ENCODE measurements at regions of chr5 and their contacts with region 1.

Region 1: DNA sequence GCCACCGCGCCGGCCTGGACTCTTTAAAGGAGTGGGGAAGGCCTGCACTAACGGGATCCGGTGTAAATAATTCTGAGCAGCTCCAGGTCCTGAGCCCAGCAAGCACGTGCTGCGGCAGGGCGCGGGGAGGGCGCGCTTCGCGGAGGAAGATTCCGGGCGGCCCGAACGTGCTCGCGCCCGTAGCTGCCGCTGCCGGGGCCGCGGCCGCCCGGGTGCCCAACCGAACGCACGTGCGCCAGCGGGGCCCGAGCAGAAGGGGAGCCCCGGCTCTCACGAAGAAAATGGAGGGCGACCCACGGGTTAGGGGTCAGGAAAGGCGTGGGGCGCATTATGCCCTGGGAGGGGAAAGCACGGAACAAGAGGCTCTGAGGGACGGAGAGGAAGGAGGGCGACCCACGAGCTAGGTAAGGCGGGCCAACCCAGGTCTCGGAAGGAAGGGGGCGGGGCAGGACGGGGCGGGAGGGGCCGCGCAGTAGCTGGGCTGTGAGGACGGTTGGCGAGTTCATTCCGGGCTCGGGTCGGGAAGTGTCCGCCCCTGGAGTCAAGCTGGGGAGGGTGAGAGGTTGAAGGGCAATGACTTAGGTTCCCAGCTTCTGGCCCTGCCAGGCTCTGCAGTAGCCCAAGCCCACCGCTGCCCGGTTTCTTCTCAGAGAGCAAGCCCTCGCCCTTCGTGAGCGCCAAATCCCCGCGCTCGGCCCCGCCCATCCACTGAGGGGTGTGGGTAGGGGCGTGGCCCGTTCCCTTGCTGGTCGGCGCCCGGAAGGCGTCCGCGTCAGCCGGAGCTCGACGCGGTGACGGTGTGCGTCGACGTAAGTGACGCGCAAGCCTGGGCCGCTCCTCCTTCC is at the start of gene ZNF131:
- DNase-seq: peak; percentile 96
- H3K4me3 Mint-ChIP-seq: peak within 1 kb of the TSS; percentile 92
- H3K27ac Mint-ChIP-seq: peak within 1 kb of the TSS; percentile 90
- H3K4me1 Mint-ChIP-seq: peaks cover 5% of the 10 kb centered on the region
- H3K27me3 Mint-ChIP-seq: no peaks in the 10 kb centered on the region
- CTCF ChIP-seq: no peak
- total RNA-seq, gene ZNF131: 41.3 and 42.4 TPM in 2 replicates

Region 2: DNA sequence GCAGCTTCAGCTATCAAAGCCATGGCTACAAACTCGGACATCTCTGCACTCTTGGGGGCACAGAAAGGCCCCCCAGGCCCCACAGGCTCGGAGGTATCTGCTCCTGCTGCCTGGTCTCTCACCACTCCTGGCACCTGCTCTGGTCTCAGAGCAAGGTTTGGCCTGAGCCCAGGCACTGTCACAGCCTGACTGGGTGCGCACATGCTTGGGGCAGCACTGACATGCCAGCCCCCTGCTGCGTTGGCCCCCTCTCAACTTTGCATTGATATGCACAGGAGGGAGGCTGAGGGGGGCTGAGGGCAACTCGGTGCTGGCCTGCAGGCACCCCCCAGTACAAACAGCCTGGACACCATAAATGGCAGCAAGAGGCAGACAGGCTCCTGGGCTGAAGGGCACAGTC is 724.8 kb before region 1 on chr5:
- CTCF ChIA-PET with region 1: no interaction called
- POLR2A ChIA-PET with region 1: no interaction called
- intact Hi-C with region 1: no loop called
- DNase-seq: no peak
- H3K4me3 Mint-ChIP-seq: no peak overlapping the region
- H3K27ac Mint-ChIP-seq: no peak overlapping the region
- H3K4me1 Mint-ChIP-seq: no peaks in the 10 kb centered on the region
- H3K27me3 Mint-ChIP-seq: no peaks in the 10 kb centered on the region
- CTCF ChIP-seq: no peak

Region 3: GRCh38 chr5:43040287-43041098 is 80.4 kb before region 1 on chr5 and contains the start of gene ANXA2R:
- CTCF ChIA-PET with region 1: interaction called, 3 read pairs
- POLR2A ChIA-PET with region 1: interaction called, 26 read pairs
- intact Hi-C with region 1: no loop called
- DNase-seq: no peak
- H3K4me3 Mint-ChIP-seq: peak within 1 kb of the TSS; percentile 88
- H3K27ac Mint-ChIP-seq: peak within 1 kb of the TSS; percentile 95
- H3K4me1 Mint-ChIP-seq: no peaks in the 10 kb centered on the region
- H3K27me3 Mint-ChIP-seq: no peaks in the 10 kb centered on the region
- CTCF ChIP-seq: no peak
- total RNA-seq, gene ANXA2R: 0.98 and 1.3 TPM in 2 replicates

Region 4: DNA sequence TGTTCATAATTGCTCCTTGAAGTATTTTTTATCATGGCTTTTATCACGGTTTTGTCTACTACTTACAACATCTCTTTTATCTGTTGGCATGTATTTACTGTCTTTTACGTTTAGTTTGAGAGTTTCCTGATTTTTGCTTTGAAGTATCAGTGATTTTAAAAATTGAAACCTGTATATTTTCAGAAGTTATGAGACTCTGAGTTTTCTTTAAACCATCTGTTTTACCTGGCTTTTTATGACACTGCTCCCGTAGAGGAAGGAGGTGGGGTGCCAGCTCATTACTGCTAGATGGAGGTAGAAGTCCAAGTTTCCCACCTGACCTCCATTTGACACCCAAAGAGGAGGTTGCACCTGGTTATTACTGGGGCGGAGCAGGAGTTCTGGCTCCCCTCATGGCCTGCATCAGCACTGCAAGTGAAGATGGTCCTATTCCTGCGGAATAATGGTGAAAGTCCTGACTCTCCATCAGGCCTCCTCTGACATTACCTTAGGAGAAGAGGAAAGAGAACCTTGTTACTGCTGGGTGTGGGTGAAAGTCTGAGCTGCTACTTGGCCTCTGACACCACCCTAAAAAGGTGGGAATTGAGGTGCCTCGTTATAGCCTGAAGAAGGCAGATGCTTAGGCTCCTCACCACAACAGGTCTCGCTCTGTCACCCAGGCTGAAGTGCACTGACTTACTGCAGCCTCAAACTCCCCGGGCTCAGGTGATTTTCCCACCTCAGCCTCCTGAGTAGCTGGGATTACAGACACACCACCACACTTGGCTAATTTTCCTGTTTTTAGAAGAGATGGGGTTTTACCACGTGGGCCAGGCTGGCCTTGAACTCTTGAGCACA is 10.1 kb before region 1 on chr5:
- CTCF ChIA-PET with region 1: interaction called, 126 read pairs
- POLR2A ChIA-PET with region 1: interaction called, 36 read pairs
- intact Hi-C with region 1: no loop called
- DNase-seq: peak; percentile 8
- H3K4me3 Mint-ChIP-seq: no peak overlapping the region
- H3K27ac Mint-ChIP-seq: no peak overlapping the region
- H3K4me1 Mint-ChIP-seq: no peaks in the 10 kb centered on the region
- H3K27me3 Mint-ChIP-seq: no peaks in the 10 kb centered on the region
- CTCF ChIP-seq: no peak

Region 5: GRCh38 chr5:43274156-43275114 is 153.5 kb after region 1 on chr5:
- CTCF ChIA-PET with region 1: no interaction called
- POLR2A ChIA-PET with region 1: no interaction called
- intact Hi-C with region 1: no loop called
- DNase-seq: no peak
- H3K4me3 Mint-ChIP-seq: no peak overlapping the region
- H3K27ac Mint-ChIP-seq: no peak overlapping the region
- H3K4me1 Mint-ChIP-seq: no peaks in the 10 kb centered on the region
- H3K27me3 Mint-ChIP-seq: no peaks in the 10 kb centered on the region
- CTCF ChIP-seq: no peak

Region 6: GRCh38 chr5:43305948-43306565 is 185.1 kb after region 1 on chr5:
- CTCF ChIA-PET with region 1: interaction called, 5 read pairs
- POLR2A ChIA-PET with region 1: interaction called, 52 read pairs
- intact Hi-C with region 1: loop called (anchors 5 kb)
- DNase-seq: peak; percentile 68
- H3K4me3 Mint-ChIP-seq: no peak overlapping the region
- H3K27ac Mint-ChIP-seq: peak overlapping the region; percentile 54
- H3K4me1 Mint-ChIP-seq: peaks cover 50% of the 10 kb centered on the region
- H3K27me3 Mint-ChIP-seq: no peaks in the 10 kb centered on the region
- CTCF ChIP-seq: peak; percentile 69

Region 7: DNA sequence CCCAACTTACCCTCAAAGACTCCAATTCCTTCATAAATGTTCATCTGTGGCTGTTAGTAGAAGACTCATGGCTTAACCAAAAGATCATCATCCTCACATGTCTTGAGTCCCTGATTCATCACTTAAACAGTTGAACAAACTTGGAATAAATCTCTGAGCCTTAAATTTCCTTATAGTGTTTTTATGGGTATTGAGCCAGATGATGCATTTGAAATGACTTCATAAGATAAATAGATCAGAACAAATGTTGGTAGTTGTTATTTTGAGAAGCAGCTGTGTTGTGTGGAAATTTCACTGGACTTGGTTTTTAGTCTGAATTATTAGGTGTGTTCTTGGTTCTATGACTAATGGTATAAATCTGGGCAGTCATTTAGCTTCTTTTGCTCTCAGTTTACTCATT is 718.3 kb after region 1 on chr5:
- CTCF ChIA-PET with region 1: no interaction called
- POLR2A ChIA-PET with region 1: no interaction called
- intact Hi-C with region 1: no loop called
- DNase-seq: peak; percentile 58
- H3K4me3 Mint-ChIP-seq: no peak overlapping the region
- H3K27ac Mint-ChIP-seq: peak overlapping the region; percentile 77
- H3K4me1 Mint-ChIP-seq: peaks cover 33% of the 10 kb centered on the region
- H3K27me3 Mint-ChIP-seq: no peaks in the 10 kb centered on the region
- CTCF ChIP-seq: no peak